ENCODE measurements at regions of chr9 and their contacts with region 1.

Region 1: DNA sequence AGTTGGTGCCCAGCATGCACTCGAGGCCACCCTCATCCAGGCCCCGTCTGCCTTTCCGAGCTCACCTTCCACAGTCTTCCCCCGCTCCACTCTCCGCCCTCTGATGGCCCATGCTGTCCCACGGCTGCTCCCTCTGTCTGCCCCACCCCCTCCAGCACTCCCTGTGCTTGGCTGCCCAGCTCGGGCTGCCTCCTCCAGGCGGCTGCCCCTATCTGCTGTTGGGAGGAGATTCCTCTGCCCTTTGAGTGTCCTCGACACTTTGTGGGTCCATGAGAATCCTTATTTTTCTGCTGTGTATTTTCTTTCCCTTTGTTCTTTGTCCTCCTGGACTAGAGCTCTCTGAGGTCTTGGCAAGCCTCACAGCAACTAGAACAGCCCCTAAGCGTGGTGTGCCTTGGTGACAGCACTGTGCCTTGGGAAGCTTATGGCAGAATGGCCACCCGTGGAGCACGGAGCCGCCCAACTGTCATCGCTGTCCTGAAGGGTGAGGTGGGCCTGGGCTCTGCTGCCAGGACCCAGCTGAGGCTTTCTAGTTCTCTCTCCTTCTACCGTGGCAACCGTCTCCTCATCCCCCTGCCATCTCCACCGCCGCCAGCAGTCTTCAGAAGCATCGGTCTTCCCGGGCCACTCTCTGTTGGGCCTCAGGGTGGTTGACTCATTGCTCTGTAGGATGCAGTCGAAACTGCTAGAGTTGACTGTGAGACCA is 5.2 kb downstream of the NTMT1 start:
- DNase-seq: no peak
- H3K4me3 ChIP-seq: peak overlapping the region; percentile 19
- CTCF ChIP-seq: no peak

Region 2: DNA sequence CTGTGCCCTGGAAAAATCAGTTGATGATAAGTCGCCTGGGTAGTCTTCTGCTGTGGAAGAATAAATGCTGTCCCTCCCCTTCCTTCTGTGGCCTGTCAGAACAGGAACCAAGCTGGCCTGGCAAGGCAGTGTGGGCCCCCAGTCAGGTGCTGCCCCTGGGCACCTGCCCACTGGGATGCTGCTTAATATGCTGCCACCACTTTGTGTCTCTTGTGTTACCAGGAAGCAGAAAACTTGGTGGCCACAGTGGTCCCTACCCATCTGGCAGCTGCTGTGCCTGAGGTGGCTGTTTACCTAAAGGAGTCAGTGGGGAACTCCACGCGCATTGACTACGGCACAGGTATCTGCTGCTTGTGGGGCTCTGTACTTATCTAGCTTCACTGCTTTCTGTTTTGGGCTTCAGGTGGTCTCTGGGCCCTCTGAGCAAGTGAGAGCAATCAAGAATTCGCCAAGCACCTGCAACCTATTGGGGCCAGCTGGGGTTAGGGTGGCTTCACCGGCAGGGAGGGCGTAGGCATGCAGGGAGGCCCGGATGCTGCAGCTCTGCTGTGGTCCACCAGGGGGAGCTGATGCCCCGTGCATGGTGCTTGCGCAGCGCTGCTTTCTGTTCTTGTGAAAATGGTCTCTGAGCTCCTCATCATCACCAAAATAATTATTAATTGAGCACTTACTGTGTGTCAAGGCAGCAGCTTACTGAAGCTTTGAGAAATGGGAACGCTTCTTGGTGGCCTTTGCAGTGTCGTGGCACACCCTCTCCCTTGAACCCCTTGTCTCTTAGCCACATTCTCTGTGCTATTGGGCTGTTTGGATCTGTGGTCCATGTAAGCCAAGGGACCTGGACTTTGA is 499.6 kb before region 1 on chr9:
- in situ Hi-C with region 1: loop called (anchors 5 kb)
- DNase-seq: no peak
- H3K4me3 ChIP-seq: no peak overlapping the region
- CTCF ChIP-seq: peak; percentile 98

Region 3: DNA sequence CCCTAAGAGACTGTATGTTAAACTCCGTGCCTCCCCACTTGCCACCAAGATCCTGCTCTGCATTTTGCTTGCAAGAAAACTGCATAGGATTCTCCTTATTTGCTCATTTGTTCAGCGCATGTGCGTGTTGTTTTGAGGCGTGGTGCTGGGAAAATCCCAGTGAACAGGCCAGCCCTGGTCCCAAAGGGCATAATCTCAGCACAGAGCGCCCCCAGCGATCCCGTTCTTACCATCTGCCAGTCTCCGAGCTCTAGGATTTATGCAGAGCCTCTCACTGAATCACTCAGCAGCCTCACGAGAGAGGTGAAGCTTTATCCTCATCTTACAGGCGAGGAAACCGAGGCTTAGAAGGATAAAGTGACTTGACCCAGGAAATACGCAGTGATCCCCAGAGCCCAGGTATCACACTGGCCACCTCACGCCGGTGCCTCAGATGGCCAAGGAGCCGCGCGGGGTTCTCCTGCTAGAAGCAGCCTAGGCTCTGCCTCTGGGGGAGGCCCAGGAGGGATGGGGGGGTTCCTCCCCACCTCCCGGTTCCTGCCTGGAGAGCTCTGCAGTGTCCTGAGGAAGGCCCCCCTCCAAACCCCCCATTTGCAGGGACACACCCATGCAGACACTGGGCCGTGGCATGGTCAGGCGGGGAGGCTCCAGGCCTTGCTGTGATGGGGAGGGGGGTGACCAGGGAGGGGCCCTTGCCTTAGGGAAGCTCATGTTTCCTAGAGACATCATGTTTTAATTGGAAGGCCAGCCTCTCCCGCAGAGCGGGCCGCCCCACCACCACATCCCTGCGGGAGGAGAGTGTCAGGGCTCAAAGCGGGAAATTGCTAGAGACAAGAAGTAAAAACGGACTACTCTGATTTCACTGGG is 46.1 kb after region 1 on chr9:
- in situ Hi-C with region 1: loop called (anchors 5 kb)
- DNase-seq: no peak
- H3K4me3 ChIP-seq: no peak overlapping the region
- CTCF ChIP-seq: no peak

Region 4: GRCh38 chr9:129720181-129720864 is 89.2 kb after region 1 on chr9:
- in situ Hi-C with region 1: loop called (anchors 5 kb)
- DNase-seq: no peak
- H3K4me3 ChIP-seq: no peak overlapping the region
- CTCF ChIP-seq: peak; percentile 46

Region 5: GRCh38 chr9:129776938-129777768 is 146.0 kb after region 1 on chr9:
- in situ Hi-C with region 1: loop called (anchors 5 kb)
- DNase-seq: peak; percentile 99
- H3K4me3 ChIP-seq: peak overlapping the region; percentile 5
- CTCF ChIP-seq: no peak

Region 6: DNA sequence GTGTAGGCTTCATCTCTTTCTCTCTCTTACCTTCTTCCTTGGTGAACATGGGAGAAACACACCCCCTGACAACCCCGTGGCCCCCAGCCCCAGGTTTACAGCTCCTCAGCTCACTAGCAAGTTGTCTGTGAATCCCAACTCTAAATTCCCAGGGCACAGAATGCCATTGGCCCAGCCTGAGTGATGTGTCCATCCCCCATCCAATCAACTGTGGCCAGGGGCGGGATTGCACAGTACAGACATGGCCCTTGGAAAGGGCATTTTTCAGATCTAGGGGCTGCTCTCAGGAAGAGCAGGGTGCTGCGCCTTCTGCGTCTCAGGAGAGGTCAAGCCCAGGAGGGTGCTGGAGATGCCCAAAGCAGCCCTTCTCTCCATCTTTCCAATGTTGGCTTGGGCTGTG is 765.5 kb after region 1 on chr9:
- in situ Hi-C with region 1: no loop called
- DNase-seq: no peak
- H3K4me3 ChIP-seq: no peak overlapping the region
- CTCF ChIP-seq: no peak